Activated naive CD8-positive, alpha-beta T cell treated with anti-CD3 and anti-CD28 coated beads, Interleukin-2, amount 10 ng/mL, durations not matched to agents 7 days and 5 days (primary cell): ENCODE measurements at regions of chr16 and their contacts with region 1.

Region 1: DNA sequence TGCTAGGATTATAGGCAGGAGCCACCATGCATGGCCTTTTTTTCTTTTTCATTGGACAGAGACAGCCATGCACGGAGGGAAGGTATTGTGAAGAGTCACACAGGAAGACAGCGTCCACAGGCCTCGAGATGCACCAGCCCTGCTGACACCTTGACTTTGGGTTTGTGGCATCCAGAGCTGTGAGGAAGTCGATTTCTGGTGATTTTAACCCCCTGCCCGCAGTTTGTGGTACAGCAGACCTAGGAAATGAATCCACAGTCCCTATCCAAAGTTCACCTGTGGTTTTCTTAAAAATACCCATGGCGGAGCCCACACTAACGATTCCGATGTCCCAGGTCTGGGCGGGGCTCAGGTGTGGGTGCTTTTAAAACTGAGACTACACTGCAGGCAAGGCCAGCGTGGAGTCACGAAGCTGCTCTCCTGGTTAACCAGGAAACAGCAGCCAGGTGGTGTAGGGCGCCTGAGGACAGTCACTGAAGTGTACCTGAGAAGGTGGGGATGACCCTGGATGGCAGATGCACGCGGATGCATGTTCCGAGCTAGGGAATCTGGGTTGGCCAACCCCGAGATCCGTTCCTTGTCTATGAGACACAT is 14.4 kb upstream of the MEAK7 start:
- DNase-seq: peak; percentile 78
- ATAC-seq: peak; percentile 55
- H3K4me3 Mint-ChIP-seq: peak overlapping the region; percentile 63
- H3K27ac Mint-ChIP-seq: peak overlapping the region; percentile 90
- H3K4me1 Mint-ChIP-seq: peaks cover 77% of the 10 kb centered on the region
- H3K27me3 Mint-ChIP-seq: no peaks in the 10 kb centered on the region

Region 2: DNA sequence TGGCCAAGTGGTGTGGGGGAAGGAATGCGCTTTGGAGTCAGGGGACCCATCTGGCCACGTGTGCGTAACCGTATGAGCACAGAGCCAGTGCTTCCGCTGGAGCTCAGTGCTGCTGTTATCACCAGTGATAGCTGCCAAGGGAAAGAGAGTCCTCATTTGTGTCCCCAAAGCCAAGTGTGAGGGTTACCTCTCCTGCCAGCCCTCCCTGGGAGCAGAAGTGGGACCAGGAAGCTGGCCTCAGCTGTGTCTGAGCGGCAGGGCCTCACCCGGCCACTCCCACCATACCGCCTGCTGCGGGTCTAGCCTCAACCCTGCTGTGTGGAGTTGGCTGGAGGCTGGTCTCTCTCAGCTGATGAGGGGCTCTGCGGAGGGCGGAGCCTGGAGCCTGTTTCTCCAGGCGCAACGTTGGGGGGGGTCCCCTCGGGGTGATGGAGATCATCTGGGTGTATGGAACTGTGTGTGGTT is 58.9 kb before region 1 on chr16:
- POLR2A ChIA-PET with region 1: no interaction called
- DNase-seq: peak; percentile 26
- ATAC-seq: no peak
- H3K4me3 Mint-ChIP-seq: no peak overlapping the region
- H3K27ac Mint-ChIP-seq: no peak overlapping the region
- H3K4me1 Mint-ChIP-seq: peaks cover 5% of the 10 kb centered on the region
- H3K27me3 Mint-ChIP-seq: no peaks in the 10 kb centered on the region

Region 3: GRCh38 chr16:84498859-84499620 is 19.8 kb before region 1 on chr16:
- POLR2A ChIA-PET with region 1: no interaction called
- DNase-seq: no peak
- ATAC-seq: no peak
- H3K4me3 Mint-ChIP-seq: no peak overlapping the region
- H3K27ac Mint-ChIP-seq: no peak overlapping the region
- H3K4me1 Mint-ChIP-seq: no peaks in the 10 kb centered on the region
- H3K27me3 Mint-ChIP-seq: no peaks in the 10 kb centered on the region

Region 4: GRCh38 chr16:84548971-84549844 is 30.4 kb after region 1 on chr16:
- POLR2A ChIA-PET with region 1: interaction called, 94 read pairs
- DNase-seq: peak; percentile 63
- ATAC-seq: peak; percentile 48
- H3K4me3 Mint-ChIP-seq: peak overlapping the region; percentile 87
- H3K27ac Mint-ChIP-seq: peak overlapping the region; percentile 92
- H3K4me1 Mint-ChIP-seq: peaks cover 47% of the 10 kb centered on the region
- H3K27me3 Mint-ChIP-seq: no peaks in the 10 kb centered on the region

Region 5: GRCh38 chr16:84555418-84556195 is 36.8 kb after region 1 on chr16:
- POLR2A ChIA-PET with region 1: interaction called, 94 read pairs
- DNase-seq: no peak
- ATAC-seq: no peak
- H3K4me3 Mint-ChIP-seq: peak overlapping the region; percentile 13
- H3K27ac Mint-ChIP-seq: peak overlapping the region; percentile 94
- H3K4me1 Mint-ChIP-seq: peaks cover 26% of the 10 kb centered on the region
- H3K27me3 Mint-ChIP-seq: no peaks in the 10 kb centered on the region

Region 6: GRCh38 chr16:84593825-84594724 is 75.2 kb after region 1 on chr16:
- POLR2A ChIA-PET with region 1: interaction called, 41 read pairs
- DNase-seq: peak; percentile 82
- ATAC-seq: peak; percentile 87
- H3K4me3 Mint-ChIP-seq: peak overlapping the region; percentile 86
- H3K27ac Mint-ChIP-seq: peak overlapping the region; percentile 85
- H3K4me1 Mint-ChIP-seq: peaks cover 65% of the 10 kb centered on the region
- H3K27me3 Mint-ChIP-seq: no peaks in the 10 kb centered on the region

Region 7: DNA sequence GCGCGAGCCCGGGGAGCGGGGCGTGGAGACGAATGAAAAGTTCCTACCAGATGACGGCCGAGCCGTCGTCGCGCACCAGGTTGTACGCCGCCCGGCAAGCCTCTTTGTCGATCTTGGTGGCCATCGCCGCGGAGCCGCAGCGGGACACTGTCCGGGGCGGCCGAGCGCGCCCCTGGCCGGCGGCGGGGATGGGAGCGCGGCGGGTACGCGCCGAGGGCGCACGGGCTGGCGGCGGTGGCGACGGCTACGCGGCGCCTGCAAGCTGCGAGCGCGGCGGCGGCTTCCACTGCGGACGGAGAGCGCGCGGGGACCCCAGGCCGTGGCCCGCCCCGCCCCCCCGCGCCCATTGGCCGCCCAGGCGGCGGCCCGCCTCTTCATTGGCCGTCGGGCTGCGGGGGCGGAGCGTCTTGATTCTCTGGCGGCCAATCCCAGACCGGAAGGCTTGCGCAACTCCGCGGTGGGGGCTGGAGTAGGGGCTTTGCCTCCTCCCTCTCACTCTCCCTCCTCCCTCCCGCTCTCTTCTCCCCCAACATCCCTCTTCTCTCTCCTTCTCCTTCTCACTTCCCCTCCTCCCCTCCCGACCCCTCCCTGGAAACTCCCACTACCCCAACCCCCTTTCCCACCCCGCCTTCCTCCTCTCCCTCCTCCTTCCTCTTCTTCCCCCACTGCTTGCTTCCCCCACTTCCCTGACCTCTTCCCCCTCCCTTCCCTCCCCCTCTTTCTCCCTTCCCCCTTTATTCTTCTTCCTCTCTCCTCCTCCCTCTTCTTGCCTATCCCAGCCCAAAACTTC is 99.1 kb after region 1 on chr16 and contains the start of gene COTL1:
- POLR2A ChIA-PET with region 1: interaction called, 20 read pairs
- DNase-seq: peak; percentile 95
- ATAC-seq: peak; percentile 79
- H3K4me3 Mint-ChIP-seq: peak within 1 kb of the TSS; percentile 96
- H3K27ac Mint-ChIP-seq: peak within 1 kb of the TSS; percentile 87
- H3K4me1 Mint-ChIP-seq: peaks cover 48% of the 10 kb centered on the region
- H3K27me3 Mint-ChIP-seq: peaks cover 1% of the 10 kb centered on the region
- total RNA-seq, gene COTL1: 657 to 664 TPM